Right ventricle myocardium superior (tissue), 1 donor: ENCODE measurements at regions of chr4 and their contacts with region 1.

Region 1: DNA sequence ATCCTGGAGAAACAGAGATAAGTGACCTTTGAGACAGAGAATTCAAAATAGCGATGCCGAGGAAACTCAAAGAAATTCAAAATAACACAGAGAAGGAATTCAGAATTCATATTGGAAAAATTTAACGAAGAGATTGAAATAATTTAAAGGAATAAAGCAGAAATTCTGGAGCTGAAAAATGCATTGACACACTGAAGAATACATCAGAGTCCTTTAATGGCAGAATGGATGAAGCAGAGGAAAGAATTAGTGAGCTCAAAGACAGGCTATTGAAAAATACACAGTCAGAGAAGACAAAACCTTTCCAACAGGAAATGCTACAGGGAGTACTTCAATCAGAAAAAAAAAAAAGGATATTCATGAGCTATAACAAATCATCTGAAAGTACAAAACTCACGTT is 185.8 kb downstream of the PARM1 start:
- DNase-seq: no peak
- ATAC-seq: no peak

Region 2: DNA sequence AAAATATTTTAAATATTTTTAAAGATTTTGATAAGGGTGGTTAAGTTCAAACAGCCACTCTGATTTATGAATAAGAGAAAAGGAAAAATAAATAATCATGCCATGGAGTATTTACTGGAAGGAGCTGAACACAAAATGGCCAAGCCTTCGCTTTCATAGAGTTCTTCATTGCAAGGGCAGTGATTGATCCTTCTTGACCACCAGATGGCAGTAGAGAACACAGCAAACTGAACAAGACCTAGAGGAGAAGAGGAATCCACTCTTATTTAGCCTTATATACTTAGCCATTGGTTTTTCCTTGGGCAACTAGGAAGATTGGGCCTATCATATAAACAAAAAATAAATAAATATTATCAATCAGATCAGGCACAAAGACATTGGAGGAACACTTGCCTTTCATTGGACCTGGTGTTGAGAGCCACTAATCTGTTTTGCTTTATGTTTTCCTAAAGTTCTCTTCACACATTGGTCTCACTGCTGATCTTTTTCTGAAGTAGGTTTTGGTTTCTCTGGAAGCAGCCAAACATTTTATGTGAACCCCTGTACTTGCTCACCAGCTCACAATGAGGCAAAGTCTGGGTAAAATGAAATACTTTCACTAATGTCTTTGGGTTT is 243.9 kb before region 1 on chr4:
- intact Hi-C with region 1: loop called (anchors 5 kb)
- DNase-seq: no peak
- ATAC-seq: peak; percentile 91

Region 3: DNA sequence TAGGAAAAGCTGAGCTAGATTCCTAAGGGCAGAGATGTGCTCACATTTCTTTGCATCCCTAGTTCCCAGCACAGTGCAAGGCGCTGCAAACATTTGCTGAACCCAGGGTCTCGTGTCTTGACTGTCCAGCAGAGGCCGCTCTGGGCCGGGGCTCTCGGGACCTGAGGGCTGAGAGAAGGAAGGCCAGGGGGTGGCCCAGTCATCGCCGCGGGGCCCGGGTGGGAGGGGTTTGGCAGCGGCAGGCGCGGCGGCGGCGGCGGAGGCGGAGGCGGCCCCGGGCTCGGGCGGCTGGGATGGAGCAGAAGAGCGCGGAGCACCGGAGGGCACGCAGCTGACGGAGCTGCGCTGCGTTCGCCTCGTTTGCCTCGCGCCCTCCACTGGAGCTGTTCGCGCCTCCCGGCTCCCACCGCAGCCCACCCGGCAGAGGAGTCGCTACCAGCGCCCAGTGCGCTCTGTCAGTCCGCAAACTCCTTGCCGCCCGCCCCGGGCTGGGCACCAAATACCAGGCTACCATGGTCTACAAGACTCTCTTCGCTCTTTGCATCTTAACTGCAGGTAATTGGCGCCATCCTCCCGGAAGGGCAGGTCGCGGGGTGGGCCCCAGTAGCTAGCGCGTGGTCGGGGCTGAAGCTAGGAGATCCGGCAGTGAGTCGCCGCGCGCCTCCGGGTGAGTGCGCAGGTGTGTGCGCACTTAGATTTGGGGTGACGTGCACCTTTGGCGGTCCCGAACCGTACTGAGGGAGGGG is 185.8 kb before region 1 on chr4 and contains the start of gene PARM1:
- intact Hi-C with region 1: loop called (anchors 5 kb)
- DNase-seq: peak; percentile 93
- ATAC-seq: peak; percentile 98
- total RNA-seq, gene PARM1: 65.2 TPM